Activated B cell treated with CpG ODN at 0.5 μM for 24 hours (primary cell): ENCODE measurements at regions of chr20 and their contacts with region 1.

Region 1: DNA sequence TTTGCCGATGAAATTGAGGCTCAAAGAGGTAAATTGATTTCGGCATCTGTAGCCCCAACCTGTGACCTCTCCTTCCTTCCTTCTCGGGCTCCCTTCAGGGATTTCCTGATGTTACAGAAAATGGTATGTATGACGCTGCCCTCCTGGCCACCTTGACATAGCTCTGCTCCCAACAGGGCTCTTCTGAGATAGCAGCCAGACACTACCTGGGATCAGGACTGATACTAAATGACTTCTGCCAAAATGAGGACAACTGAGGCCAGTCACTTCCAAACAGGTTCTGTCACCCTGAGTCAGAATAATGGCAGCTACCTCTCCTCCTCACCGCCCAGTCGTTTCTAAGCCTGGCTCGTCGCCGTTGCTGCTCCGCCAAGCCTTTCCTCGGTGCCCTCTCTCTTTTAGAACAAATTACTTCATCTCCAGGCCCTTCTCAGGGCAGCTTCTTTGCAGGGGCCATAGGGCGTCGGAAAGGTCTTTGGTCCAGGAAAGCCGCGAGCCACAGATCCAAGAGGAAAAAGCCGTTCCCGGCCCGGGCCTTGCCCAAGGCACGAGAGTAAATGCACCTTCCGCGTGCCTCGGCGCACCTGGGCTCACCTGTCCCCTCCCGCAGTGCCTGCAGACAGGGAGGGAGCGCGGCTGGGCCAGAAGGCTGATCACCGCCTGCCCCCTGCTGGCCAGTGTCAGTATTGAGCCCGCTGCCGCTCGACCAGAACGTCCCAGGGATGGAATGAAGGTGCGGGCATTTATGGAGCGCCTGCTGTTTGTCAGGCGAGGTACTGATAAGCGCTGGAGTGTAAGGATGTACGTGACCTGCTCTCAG is 904 bp upstream of the LPIN3 start:
- DNase-seq: peak; percentile 85
- ATAC-seq: peak; percentile 90
- H3K4me3 Mint-ChIP-seq: peak overlapping the region; percentile 76
- H3K27ac Mint-ChIP-seq: peak overlapping the region; percentile 41
- H3K4me1 Mint-ChIP-seq: peaks cover 10% of the 10 kb centered on the region
- H3K27me3 Mint-ChIP-seq: peaks cover 4% of the 10 kb centered on the region
- CTCF ChIP-seq: peak; percentile 99

Region 2: DNA sequence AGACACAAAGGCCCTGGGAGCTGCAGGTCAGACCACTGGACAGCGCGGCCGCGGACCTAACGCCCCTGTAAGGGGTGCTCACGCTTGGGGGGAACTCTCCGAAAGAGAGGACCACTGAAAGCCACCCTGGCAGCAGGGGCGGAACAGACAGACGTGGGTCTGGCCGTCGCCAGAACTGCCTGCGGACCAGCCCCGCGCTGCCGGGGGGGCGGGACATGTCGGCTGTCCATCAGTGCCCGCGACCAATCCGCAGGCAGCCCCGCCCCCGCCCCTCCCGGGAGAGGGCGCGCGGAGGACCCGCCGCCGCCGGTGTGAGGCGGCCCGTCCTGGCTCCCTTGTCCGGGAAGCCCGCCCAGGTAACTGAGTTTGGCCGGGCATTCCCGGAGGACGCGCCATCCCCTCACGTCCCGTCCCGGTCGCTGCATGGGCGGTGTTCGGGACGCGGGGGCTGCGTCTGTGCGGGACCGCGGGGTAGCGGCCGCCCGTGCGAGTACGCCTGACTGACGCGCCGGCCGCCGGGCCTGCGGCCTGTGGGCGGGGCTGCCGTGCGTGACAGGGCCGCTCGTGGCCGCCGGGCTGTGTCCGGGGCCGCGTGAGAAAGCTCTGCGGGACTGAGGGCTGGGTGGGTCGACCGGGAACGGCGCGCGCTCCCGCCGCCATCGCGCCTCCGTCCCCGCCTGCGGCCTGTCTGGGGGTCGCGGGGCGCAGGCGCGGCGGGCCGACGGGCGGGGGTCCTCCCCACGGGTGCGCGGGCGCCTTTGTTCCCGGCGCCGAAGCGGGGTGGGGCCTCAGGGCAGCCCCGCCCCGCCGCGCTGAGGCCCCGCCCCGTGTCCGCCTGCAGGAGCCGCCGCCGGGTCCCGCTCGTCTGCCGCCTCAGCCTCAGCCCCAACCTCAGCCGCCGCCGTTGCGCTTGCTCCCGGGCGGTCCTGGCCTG is 202.8 kb before region 1 on chr20 and contains the start of gene PLCG1:
- CTCF ChIA-PET with region 1: interaction called, 68 read pairs
- POLR2A ChIA-PET with region 1: interaction called, 3 read pairs
- intact Hi-C with region 1: loop called (anchors 1 kb)
- DNase-seq: peak; percentile 84
- ATAC-seq: peak; percentile 73
- H3K4me3 Mint-ChIP-seq: peak within 1 kb of the TSS; percentile 84
- H3K27ac Mint-ChIP-seq: peak within 1 kb of the TSS; percentile 78
- H3K4me1 Mint-ChIP-seq: peaks cover 69% of the 10 kb centered on the region
- H3K27me3 Mint-ChIP-seq: no peaks in the 10 kb centered on the region
- CTCF ChIP-seq: no peak
- total RNA-seq, gene PLCG1: 61.1 and 61.8 TPM in 2 replicates

Region 3: DNA sequence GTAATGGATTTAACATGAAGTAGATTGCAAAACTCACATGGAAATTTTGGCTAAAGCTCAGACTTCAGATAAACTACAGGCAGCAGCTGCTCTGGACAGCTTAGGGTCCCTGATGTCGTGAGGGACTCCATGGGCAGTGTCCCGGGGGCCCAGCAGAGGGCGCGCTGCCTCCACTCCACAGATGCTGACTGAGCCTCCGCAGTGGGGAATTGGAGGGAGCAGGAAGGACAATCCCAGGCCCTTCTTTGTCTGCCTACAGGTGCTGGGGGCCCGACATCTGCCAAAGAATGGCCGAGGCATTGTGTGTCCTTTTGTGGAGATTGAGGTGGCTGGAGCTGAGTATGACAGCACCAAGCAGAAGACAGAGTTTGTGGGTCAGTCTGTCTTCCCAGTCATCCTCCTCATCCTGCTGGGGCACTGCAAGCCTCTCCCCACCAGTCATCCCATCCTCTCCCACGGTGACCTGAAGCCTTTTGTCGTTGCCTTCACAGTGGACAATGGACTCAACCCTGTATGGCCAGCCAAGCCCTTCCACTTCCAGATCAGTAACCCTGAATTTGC is 166.5 kb before region 1 on chr20:
- CTCF ChIA-PET with region 1: interaction called, 161 read pairs
- POLR2A ChIA-PET with region 1: interaction called, 5 read pairs
- intact Hi-C with region 1: loop called (anchors 1 kb)
- DNase-seq: peak; percentile 67
- ATAC-seq: peak; percentile 95
- H3K4me3 Mint-ChIP-seq: no peak overlapping the region
- H3K27ac Mint-ChIP-seq: no peak overlapping the region
- H3K4me1 Mint-ChIP-seq: no peaks in the 10 kb centered on the region
- H3K27me3 Mint-ChIP-seq: no peaks in the 10 kb centered on the region
- CTCF ChIP-seq: peak; percentile 46

Region 4: DNA sequence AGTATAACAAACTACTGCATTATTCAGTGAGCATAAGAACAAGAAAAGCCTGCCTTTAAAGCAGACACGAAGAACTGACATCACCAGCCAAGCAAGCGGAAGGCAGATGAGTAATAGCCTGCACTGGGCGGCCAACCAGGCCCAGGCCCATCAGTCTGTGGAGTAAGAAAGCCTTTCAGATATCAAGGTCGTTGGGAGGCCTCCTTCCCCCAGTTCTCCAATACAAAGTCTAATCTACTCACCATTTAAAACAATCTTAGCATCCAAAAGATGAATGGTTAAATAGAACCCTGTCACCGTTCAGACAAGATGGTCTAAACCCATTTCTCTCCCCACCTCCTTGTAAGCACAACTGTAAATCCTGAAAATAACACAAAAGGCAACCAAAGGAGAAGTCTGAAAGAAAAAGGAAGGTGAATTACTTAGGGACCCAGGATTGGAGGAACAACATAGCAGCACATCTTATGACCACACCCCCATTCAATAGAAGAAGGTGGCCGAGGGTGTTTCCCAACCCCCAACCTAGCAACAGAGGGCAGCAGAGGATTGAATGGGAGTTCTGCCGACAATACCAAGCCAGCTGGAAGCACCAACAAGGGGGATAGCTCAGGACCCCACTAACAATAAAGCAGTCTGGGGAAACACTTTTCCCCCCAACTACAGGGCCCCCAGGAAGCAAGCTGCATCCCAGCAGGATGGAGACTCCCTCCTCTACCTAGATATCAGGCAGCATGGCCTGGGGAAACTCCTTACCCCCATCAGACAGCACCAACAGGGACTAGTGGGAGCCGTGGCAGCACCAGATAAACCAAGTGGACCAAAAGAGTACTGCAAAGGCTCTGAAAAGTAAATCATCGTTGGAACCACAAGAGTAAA is 90.1 kb before region 1 on chr20:
- CTCF ChIA-PET with region 1: interaction called, 28 read pairs
- POLR2A ChIA-PET with region 1: no interaction called
- intact Hi-C with region 1: loop called (anchors 1 kb)
- DNase-seq: no peak
- ATAC-seq: peak; percentile 86
- H3K4me3 Mint-ChIP-seq: peak overlapping the region; percentile 56
- H3K27ac Mint-ChIP-seq: peak overlapping the region; percentile 84
- H3K4me1 Mint-ChIP-seq: peaks cover 62% of the 10 kb centered on the region
- H3K27me3 Mint-ChIP-seq: no peaks in the 10 kb centered on the region
- CTCF ChIP-seq: no peak

Region 5: GRCh38 chr20:41329435-41330342 is 10.0 kb before region 1 on chr20:
- CTCF ChIA-PET with region 1: interaction called, 16 read pairs
- POLR2A ChIA-PET with region 1: no interaction called
- intact Hi-C with region 1: no loop called
- DNase-seq: peak; percentile 33
- ATAC-seq: peak; percentile 100
- H3K4me3 Mint-ChIP-seq: peak overlapping the region; percentile 6
- H3K27ac Mint-ChIP-seq: peak overlapping the region; percentile 59
- H3K4me1 Mint-ChIP-seq: peaks cover 12% of the 10 kb centered on the region
- H3K27me3 Mint-ChIP-seq: no peaks in the 10 kb centered on the region
- CTCF ChIP-seq: no peak

Region 6: DNA sequence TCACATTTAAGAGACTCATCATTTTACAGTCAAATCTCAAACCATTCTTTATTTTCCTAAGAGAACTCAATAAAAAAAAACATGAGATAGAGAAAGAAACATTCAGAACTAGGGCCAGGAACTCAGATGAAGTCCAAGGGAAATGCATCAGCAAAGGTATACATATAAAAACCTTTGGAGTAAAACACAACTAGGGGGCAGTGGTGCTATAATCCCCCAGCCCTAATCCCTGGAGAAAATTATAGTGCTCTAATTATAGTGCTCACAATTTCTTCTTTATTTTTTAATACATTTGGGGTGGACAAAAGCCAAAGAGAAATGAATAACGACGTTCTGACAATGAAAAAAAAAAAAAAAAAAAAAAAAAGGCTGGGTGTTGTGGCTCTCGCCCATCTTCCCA is 127.5 kb after region 1 on chr20:
- CTCF ChIA-PET with region 1: no interaction called
- POLR2A ChIA-PET with region 1: no interaction called
- intact Hi-C with region 1: no loop called
- DNase-seq: no peak
- ATAC-seq: no peak
- H3K4me3 Mint-ChIP-seq: no peak overlapping the region
- H3K27ac Mint-ChIP-seq: no peak overlapping the region
- H3K4me1 Mint-ChIP-seq: no peaks in the 10 kb centered on the region
- H3K27me3 Mint-ChIP-seq: no peaks in the 10 kb centered on the region
- CTCF ChIP-seq: no peak

Region 7: DNA sequence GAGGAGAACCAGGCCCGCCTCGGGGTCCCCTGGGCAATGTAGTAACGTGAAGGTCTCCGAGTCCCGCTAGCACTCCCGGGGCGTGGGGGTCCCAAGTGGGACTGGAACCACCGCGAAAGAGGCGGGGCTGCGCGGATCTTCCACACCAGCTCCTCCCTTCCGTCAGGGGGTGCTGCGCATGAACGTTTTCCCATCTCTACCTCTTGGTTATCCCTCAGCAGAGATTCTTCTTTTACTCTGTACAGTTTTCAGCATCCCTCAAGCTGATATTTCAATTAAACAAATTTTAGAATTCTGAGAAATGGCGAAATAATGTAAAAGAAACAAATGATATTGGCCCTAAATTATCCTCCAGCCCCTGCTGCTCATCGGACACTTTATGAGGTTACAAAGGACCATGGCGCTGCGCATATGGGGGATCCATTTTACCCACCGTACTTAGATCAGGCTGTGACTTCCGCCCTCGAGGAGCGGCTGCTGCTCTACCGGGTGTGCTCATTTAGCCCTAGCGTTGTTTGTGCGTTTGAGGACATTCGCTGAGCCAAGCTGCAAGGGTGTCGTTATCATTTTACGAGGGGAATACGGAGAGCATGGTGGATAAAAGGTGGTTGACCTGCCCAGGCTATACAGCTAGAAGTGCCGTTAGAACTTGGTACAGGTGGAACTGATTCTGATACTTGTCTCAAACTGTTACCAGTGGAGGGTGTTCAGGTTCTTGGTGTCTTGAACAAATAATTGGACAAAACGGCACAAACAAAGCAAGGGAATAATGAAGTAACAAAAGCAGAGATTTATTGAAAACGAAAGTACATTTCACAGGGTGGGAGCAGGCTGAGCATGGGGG is 353.6 kb after region 1 on chr20:
- CTCF ChIA-PET with region 1: no interaction called
- POLR2A ChIA-PET with region 1: no interaction called
- intact Hi-C with region 1: loop called (anchors 1 kb)
- DNase-seq: peak; percentile 63
- ATAC-seq: peak; percentile 84
- H3K4me3 Mint-ChIP-seq: peak overlapping the region; percentile 92
- H3K27ac Mint-ChIP-seq: peak overlapping the region; percentile 90
- H3K4me1 Mint-ChIP-seq: peaks cover 17% of the 10 kb centered on the region
- H3K27me3 Mint-ChIP-seq: peaks cover 4% of the 10 kb centered on the region
- CTCF ChIP-seq: no peak

Region 8: GRCh38 chr20:42041072-42041471 is 701.4 kb after region 1 on chr20:
- CTCF ChIA-PET with region 1: no interaction called
- POLR2A ChIA-PET with region 1: no interaction called
- intact Hi-C with region 1: no loop called
- DNase-seq: no peak
- ATAC-seq: no peak
- H3K4me3 Mint-ChIP-seq: no peak overlapping the region
- H3K27ac Mint-ChIP-seq: no peak overlapping the region
- H3K4me1 Mint-ChIP-seq: no peaks in the 10 kb centered on the region
- H3K27me3 Mint-ChIP-seq: no peaks in the 10 kb centered on the region
- CTCF ChIP-seq: no peak